Activated CD8-positive, alpha-beta T cell treated with anti-CD3 and anti-CD28 coated beads for 36 hours (primary cell): ENCODE measurements at regions of chr13 and their contacts with region 1.

Region 1: DNA sequence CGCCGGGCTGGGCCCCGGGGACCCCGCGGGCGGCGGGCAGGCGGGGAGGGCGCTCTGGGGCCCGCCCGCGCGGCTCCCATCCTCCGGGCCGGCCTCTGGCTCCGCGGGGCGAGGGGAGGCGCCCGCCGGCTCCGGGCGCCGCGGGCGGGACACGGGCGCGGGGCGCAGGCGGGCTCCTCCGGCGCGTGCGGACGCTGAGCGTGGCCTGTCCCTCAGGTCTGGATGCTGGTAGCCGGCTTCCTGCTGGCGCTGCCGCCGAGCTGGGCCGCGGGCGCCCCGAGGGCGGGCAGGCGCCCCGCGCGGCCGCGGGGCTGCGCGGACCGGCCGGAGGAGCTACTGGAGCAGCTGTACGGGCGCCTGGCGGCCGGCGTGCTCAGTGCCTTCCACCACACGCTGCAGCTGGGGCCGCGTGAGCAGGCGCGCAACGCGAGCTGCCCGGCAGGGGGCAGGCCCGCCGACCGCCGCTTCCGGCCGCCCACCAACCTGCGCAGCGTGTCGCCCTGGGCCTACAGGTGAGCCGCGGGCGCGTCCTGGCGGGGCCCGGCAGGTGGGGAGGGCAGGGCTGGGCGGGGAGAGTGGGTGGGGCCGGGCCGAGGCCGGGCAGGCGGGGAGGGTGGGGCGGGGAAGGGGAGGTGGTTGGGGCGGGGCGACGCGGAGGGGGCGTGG is 414 bp downstream of the IL17D start:
- DNase-seq: peak; percentile 83
- ATAC-seq: peak; percentile 91
- H3K4me3 Mint-ChIP-seq: no peak overlapping the region
- H3K27ac Mint-ChIP-seq: no peak overlapping the region
- H3K4me1 Mint-ChIP-seq: peaks cover 11% of the 10 kb centered on the region
- H3K27me3 Mint-ChIP-seq: peaks cover 14% of the 10 kb centered on the region
- CTCF ChIP-seq: peak; percentile 36

Region 2: DNA sequence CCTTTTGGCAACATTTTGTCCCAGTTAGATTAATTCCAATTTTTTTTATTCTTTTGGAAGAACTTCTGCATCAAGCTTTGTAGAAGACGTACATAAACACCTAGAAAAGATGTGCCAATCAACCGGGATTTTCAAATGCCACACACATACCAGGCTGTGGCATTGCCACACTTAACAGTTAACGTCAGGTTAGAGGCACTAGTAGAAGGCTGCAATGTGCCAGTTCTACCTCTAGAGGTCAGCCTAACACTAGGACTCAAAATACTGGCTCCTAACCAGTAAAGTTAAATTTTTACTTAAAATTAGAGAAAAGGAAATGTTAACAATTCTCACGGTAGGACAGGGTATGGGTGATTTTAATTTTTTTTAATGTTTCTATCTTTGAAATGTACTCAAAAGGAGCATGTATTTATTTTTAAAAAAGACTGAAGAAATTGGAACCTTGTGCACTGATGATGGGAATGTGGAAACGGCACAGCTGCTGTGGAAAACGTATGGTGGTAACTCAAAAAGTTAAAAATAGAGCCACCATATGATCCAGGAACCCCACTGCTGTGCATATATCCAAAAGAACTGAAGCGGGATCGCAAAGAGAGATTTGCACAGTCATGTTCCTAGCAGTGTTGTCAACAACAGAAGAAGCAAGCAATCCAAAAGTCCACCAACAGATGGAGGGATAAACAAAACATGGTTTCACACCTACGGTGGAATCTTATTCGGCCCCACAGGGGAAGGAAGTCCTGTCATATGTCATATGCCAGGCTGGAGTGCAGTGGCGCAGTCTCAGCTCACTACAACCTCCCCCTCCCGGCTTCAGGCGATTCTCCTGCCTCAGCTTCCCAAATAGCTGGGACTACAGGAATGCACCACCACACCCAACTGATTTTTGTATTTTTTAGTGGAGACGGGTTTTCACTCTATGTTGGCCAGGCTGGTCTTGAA is 208.6 kb before region 1 on chr13:
- CTCF ChIA-PET with region 1: interaction called, 8 read pairs
- POLR2A ChIA-PET with region 1: no interaction called
- intact Hi-C with region 1: loop called (anchors 5 kb)
- DNase-seq: peak; percentile 79
- ATAC-seq: peak; percentile 89
- H3K4me3 Mint-ChIP-seq: no peak overlapping the region
- H3K27ac Mint-ChIP-seq: no peak overlapping the region
- H3K4me1 Mint-ChIP-seq: peaks cover 2% of the 10 kb centered on the region
- H3K27me3 Mint-ChIP-seq: no peaks in the 10 kb centered on the region
- CTCF ChIP-seq: peak; percentile 96

Region 3: DNA sequence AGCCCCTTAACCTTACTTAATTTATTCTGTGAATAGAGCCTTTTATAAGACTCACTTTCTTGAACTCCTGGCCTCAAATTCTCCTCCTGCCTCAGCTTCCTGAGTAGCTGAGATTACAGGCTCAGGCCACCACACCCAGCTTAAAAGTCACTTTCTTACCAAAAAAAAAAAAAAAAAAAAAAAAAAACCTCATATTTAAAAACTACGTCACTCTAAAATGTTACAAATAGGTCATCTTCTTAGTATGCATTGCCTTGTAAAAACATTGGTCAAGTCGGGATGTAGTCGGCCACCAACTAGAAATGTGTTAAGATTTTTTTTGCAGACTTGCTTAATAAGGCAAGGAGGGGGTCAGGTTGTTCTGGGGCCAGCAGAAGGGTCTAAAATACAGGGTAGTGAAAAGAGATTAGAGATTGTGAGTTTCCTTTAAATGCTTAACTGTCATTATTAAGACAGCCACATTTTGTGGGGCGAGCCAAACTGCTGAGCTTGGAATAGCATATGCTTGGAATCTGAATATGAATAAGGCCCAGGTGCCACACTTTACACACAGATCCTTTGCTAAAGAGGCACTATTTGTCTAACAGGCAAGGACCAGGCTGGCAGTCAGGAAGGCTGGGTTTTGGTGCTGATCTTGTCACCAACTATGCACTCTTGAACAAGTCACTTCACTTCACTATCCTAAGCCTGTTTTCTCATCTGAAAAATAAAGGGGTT is 16.9 kb before region 1 on chr13:
- CTCF ChIA-PET with region 1: no interaction called
- POLR2A ChIA-PET with region 1: no interaction called
- intact Hi-C with region 1: no loop called
- DNase-seq: no peak
- ATAC-seq: no peak
- H3K4me3 Mint-ChIP-seq: no peak overlapping the region
- H3K27ac Mint-ChIP-seq: no peak overlapping the region
- H3K4me1 Mint-ChIP-seq: no peaks in the 10 kb centered on the region
- H3K27me3 Mint-ChIP-seq: no peaks in the 10 kb centered on the region
- CTCF ChIP-seq: no peak

Region 4: GRCh38 chr13:20773194-20774080 is 69.5 kb after region 1 on chr13 and contains the start of gene EEF1AKMT1:
- CTCF ChIA-PET with region 1: no interaction called
- POLR2A ChIA-PET with region 1: interaction called, 4 read pairs
- intact Hi-C with region 1: loop called (anchors 5 kb)
- DNase-seq: peak; percentile 94
- ATAC-seq: peak; percentile 95
- H3K4me3 Mint-ChIP-seq: peak within 1 kb of the TSS; percentile 96
- H3K27ac Mint-ChIP-seq: peak within 1 kb of the TSS; percentile 99
- H3K4me1 Mint-ChIP-seq: peaks cover 55% of the 10 kb centered on the region
- H3K27me3 Mint-ChIP-seq: no peaks in the 10 kb centered on the region
- CTCF ChIP-seq: no peak
- total RNA-seq, gene EEF1AKMT1: 18.7 to 19.6 TPM